Activated naive CD4-positive, alpha-beta T cell treated with anti-CD3 and anti-CD28 coated beads for 36 hours (primary cell): ENCODE measurements at regions of chr17 and their contacts with region 1.

Region 1: GRCh38 chr17:8288336-8289102 is at the start of gene RANGRF:
- DNase-seq: peak; percentile 91
- H3K4me3 Mint-ChIP-seq: peak within 1 kb of the TSS; percentile 88
- H3K27ac Mint-ChIP-seq: peak within 1 kb of the TSS; percentile 93
- H3K4me1 Mint-ChIP-seq: peaks cover 25% of the 10 kb centered on the region
- H3K27me3 Mint-ChIP-seq: no peaks in the 10 kb centered on the region
- total RNA-seq, gene RANGRF: 36.9 to 39.1 TPM

Region 2: GRCh38 chr17:7834962-7835813 is 453.3 kb before region 1 on chr17:
- CTCF ChIA-PET with region 1: no interaction called
- intact Hi-C with region 1: loop called (anchors 10 kb)
- DNase-seq: peak; percentile 94
- H3K4me3 Mint-ChIP-seq: peak overlapping the region; percentile 93
- H3K27ac Mint-ChIP-seq: peak overlapping the region; percentile 94
- H3K4me1 Mint-ChIP-seq: peaks cover 44% of the 10 kb centered on the region
- H3K27me3 Mint-ChIP-seq: no peaks in the 10 kb centered on the region

Region 3: GRCh38 chr17:8151123-8151640 is 137.3 kb before region 1 on chr17:
- CTCF ChIA-PET with region 1: no interaction called
- intact Hi-C with region 1: loop called (anchors 1 kb)
- DNase-seq: peak; percentile 86
- H3K4me3 Mint-ChIP-seq: peak overlapping the region; percentile 84
- H3K27ac Mint-ChIP-seq: peak overlapping the region; percentile 84
- H3K4me1 Mint-ChIP-seq: peaks cover 43% of the 10 kb centered on the region
- H3K27me3 Mint-ChIP-seq: no peaks in the 10 kb centered on the region